MCF 10A (cell line): ENCODE measurements at regions of chr4 and their contacts with region 1.

Region 1: DNA sequence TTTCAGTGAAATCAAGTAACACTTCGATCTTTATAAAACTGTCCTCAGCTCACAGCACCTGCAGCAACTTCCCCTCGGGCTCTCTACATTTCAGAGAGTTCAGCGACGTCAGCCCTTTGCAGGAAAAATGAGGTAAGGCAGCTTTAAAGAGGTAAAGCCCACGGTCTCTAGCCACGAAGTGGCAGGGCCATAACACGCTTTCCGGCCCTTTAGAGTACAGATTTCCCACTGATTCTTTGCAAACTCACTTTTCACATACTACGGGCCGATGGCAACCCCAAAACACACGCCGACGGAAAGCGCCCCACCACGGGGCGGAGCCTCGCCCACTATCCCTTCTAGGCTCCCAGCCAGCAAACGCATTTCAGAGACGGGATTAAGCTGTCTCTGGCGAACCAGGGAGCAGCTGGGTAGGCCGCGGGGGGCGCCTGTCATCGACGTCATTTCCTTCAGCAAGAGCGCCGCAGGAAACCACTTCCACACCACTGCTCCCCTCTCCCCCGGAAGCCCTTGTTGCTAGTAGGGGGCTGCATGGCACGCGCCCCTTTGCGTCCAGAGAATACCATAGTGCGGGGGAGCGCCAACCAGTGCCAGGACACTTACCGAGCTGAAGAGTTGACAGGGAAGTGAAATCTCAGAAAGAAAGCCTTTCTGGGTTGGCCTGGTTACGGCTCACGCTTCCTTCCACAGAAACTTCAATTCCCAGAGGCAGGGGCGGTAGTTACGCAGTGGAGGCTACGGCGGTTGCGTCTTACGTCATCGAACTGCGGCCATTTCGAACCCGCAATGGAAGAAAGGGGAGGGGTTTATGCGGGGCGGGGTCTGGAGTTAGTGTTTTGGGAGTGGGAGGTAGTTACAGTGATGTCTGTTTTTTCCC is at the start of gene TRMT10A:
- DNase-seq: peak; percentile 97
- H3K4me3 Mint-ChIP-seq: peak within 1 kb of the TSS; percentile 93
- H3K27ac Mint-ChIP-seq: peak within 1 kb of the TSS; percentile 100
- H3K4me1 Mint-ChIP-seq: no peaks in the 10 kb centered on the region
- H3K27me3 Mint-ChIP-seq: peaks cover 15% of the 10 kb centered on the region
- CTCF ChIP-seq: no peak
- total RNA-seq, gene TRMT10A: 17.7 and 19.1 TPM in 2 replicates

Region 2: GRCh38 chr4:99710681-99711345 is 147.3 kb after region 1 on chr4:
- CTCF ChIA-PET with region 1: interaction called, 4 read pairs
- POLR2A ChIA-PET with region 1: interaction called, 12 read pairs
- intact Hi-C with region 1: no loop called
- DNase-seq: peak; percentile 82
- H3K4me3 Mint-ChIP-seq: no peak overlapping the region
- H3K27ac Mint-ChIP-seq: peak overlapping the region; percentile 24
- H3K4me1 Mint-ChIP-seq: peaks cover 14% of the 10 kb centered on the region
- H3K27me3 Mint-ChIP-seq: no peaks in the 10 kb centered on the region
- CTCF ChIP-seq: no peak

Region 3: GRCh38 chr4:99723612-99724011 is 160.1 kb after region 1 on chr4:
- CTCF ChIA-PET with region 1: interaction called, 8 read pairs
- POLR2A ChIA-PET with region 1: interaction called, 12 read pairs
- intact Hi-C with region 1: loop called (anchors 1 kb)
- DNase-seq: peak; percentile 93
- H3K4me3 Mint-ChIP-seq: no peak overlapping the region
- H3K27ac Mint-ChIP-seq: no peak overlapping the region
- H3K4me1 Mint-ChIP-seq: peaks cover 13% of the 10 kb centered on the region
- H3K27me3 Mint-ChIP-seq: no peaks in the 10 kb centered on the region
- CTCF ChIP-seq: no peak

Region 4: GRCh38 chr4:99763635-99764101 is 200.1 kb after region 1 on chr4:
- CTCF ChIA-PET with region 1: interaction called, 5 read pairs
- POLR2A ChIA-PET with region 1: no interaction called
- intact Hi-C with region 1: loop called (anchors 2 kb)
- DNase-seq: peak; percentile 98
- H3K4me3 Mint-ChIP-seq: no peak overlapping the region
- H3K27ac Mint-ChIP-seq: no peak overlapping the region
- H3K4me1 Mint-ChIP-seq: peaks cover 30% of the 10 kb centered on the region
- H3K27me3 Mint-ChIP-seq: no peaks in the 10 kb centered on the region
- CTCF ChIP-seq: no peak

Region 5: GRCh38 chr4:99816545-99817308 is 253.2 kb after region 1 on chr4 and contains the start of gene DAPP1:
- CTCF ChIA-PET with region 1: no interaction called
- POLR2A ChIA-PET with region 1: interaction called, 15 read pairs
- intact Hi-C with region 1: no loop called
- DNase-seq: peak; percentile 92
- H3K4me3 Mint-ChIP-seq: peak within 1 kb of the TSS; percentile 72
- H3K27ac Mint-ChIP-seq: peak within 1 kb of the TSS; percentile 11
- H3K4me1 Mint-ChIP-seq: peaks cover 36% of the 10 kb centered on the region
- H3K27me3 Mint-ChIP-seq: no peaks in the 10 kb centered on the region
- CTCF ChIP-seq: no peak
- total RNA-seq, gene DAPP1: 17.6 and 24.7 TPM in 2 replicates

Region 6: DNA sequence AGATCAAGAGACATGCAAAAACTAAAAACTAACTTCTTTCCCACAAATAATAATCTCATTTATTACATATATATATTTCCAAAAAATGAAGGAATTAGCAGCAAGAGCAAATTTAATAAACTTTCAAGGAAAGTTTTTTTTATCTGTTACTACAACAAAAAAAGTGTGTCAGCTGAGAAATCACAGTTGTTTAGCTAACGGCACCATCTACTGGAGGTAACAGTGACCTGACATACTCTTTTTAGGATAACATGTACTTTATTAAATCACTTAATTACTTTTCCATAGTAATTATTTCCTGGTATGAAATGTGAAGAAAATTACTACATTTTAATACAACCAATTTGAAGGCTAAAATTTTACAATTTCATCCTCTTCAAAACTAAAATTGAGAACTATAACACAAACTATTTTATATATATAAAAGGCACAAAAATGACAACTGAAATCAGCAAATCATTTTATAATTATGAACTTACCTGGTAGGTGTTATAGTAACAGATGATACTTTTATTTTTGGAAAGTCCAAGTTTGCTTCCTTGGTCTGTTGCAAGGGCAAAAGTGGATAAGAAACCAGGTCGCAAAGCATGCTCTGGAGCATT is 321.6 kb after region 1 on chr4:
- CTCF ChIA-PET with region 1: interaction called, 6 read pairs
- POLR2A ChIA-PET with region 1: no interaction called
- intact Hi-C with region 1: loop called (anchors 1 kb)
- DNase-seq: peak; percentile 64
- H3K4me3 Mint-ChIP-seq: no peak overlapping the region
- H3K27ac Mint-ChIP-seq: no peak overlapping the region
- H3K4me1 Mint-ChIP-seq: peaks cover 5% of the 10 kb centered on the region
- H3K27me3 Mint-ChIP-seq: no peaks in the 10 kb centered on the region
- CTCF ChIP-seq: peak; percentile 39

Region 7: DNA sequence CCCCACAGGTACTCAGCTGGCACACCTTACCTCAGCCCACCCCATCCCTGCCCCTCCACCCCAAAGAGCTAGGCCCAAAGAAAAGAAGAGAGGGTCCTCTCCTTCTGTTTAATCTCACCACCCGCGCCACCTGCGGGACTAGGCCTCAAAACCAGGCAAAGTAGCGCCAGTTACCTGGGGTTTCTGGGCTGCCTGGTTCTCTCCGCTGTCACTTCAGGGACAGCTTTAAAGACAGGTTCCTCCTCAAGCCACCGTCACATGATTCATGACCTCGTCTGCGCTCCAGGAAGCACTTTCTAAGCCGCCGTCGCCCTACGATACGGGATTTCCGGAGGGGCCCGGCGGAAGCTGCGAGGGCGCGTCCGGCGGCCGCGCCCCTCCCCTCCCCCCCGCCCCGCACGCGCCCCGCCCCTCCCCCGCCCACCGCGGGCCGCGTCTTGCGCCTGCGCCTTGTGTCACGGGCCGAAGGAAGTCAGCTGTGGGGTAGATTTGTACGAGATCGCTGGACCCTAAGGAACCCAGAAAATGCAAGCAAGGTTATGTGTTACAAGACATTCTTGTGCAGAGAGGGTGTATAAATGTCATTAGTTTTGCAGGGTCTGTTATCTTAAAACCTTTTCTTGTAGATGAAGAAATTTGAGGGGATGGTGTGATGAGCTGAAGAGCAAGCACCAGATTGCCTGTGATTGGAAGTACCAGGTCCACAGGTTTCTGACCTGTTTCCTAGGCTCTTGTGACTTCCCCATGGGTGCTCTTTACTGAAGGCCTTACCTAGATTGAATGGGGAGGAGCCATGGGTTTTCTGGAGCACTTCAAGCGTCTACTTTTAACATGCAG is 330.8 kb after region 1 on chr4 and contains the start of gene LAMTOR3:
- CTCF ChIA-PET with region 1: no interaction called
- POLR2A ChIA-PET with region 1: interaction called, 16 read pairs
- intact Hi-C with region 1: no loop called
- DNase-seq: peak; percentile 92
- H3K4me3 Mint-ChIP-seq: peak within 1 kb of the TSS; percentile 96
- H3K27ac Mint-ChIP-seq: peak within 1 kb of the TSS; percentile 98
- H3K4me1 Mint-ChIP-seq: peaks cover 27% of the 10 kb centered on the region
- H3K27me3 Mint-ChIP-seq: no peaks in the 10 kb centered on the region
- CTCF ChIP-seq: no peak
- total RNA-seq, gene LAMTOR3: 33.5 and 35.9 TPM in 2 replicates

Region 8: GRCh38 chr4:99934891-99935290 is 371.3 kb after region 1 on chr4:
- CTCF ChIA-PET with region 1: no interaction called
- POLR2A ChIA-PET with region 1: no interaction called
- intact Hi-C with region 1: no loop called
- DNase-seq: no peak
- H3K4me3 Mint-ChIP-seq: no peak overlapping the region
- H3K27ac Mint-ChIP-seq: no peak overlapping the region
- H3K4me1 Mint-ChIP-seq: no peaks in the 10 kb centered on the region
- H3K27me3 Mint-ChIP-seq: no peaks in the 10 kb centered on the region
- CTCF ChIP-seq: no peak